Gastrocnemius medialis (tissue), 4 donors: ENCODE measurements at regions of chr1 and their contacts with region 1.

Region 1: DNA sequence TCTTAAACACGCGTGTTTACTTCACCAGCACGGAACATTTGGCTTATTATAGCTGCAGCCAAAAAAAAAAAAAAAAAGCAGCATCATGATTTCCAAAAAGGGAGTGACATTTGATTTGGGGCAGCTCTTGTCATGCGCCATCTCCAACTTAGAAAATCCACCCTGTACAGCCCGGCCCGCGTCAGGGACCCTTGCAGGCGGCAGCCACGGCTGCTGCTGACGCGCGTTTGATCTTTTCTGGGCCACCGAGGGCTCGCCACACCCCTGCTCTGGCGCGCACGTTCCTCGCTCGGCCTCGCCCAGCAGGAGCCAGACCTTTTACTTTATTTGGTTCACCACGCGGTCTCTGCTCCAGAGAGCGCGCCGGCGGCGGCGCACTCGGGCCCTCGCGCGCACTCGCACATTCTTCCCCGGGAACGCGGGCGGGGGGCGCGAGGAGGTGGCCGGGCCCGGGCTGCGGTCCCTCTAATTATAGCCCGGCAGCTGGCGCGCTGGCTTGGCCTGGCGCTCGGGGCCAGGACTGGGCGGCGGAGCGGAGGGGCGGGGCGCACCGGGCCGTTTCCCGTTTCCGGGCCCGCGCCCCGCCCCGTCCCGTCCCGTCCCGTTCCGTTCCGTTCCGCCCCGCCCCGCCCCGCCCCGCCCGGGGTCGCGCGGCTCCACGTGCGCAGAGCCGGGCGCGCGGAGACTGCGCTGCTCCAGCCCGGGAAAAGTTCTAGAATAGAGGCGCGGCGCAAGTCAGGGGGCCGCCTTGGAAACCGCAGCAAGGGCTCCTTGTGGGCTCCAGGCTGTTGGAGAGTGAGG is 10.2 kb downstream of the IRF2BP2 start:
- DNase-seq: peak; percentile 84 to 94
- ATAC-seq: peak; percentile 66 to 69
- H3K4me3 ChIP-seq: peak overlapping the region; percentile 55 to 60 (median 56)
- H3K27ac ChIP-seq: peak overlapping the region; percentile 98
- H3K4me1 ChIP-seq: peaks cover 56 to 57% of the 10 kb centered on the region in 2 donors
- H3K27me3 ChIP-seq: no peaks in the 10 kb centered on the region
- CTCF ChIP-seq: peak in 1 of 5 experiments; percentile 46
- POLR2A ChIP-seq: peak; percentile 76 to 89

Region 2: GRCh38 chr1:234564642-234565037 is 35.2 kb before region 1 on chr1:
- in situ Hi-C with region 1: no loop called
- intact Hi-C with region 1: no loop called
- DNase-seq: peak in 1 of 2 donors; percentile 67
- ATAC-seq: peak; percentile 80 to 94
- H3K4me3 ChIP-seq: no peak overlapping the region
- H3K27ac ChIP-seq: peak overlapping the region; percentile 8 to 74 (median 61)
- H3K4me1 ChIP-seq: peaks cover 29 to 32% of the 10 kb centered on the region in 2 donors
- H3K27me3 ChIP-seq: no peaks in the 10 kb centered on the region
- CTCF ChIP-seq: no peak
- POLR2A ChIP-seq: no peak

Region 3: GRCh38 chr1:235093696-235094592 is 494.1 kb after region 1 on chr1:
- in situ Hi-C with region 1: loop called in 1 of 4 experiments (anchors 10 kb)
- intact Hi-C with region 1: no loop called
- DNase-seq: peak in 1 of 2 donors; percentile 66
- ATAC-seq: peak; percentile 61 to 64
- H3K4me3 ChIP-seq: peak overlapping the region in 2 of 4 donors; percentile 15 to 37
- H3K27ac ChIP-seq: no peak overlapping the region
- H3K4me1 ChIP-seq: peaks cover 5% of the 10 kb centered on the region in 2 donors
- H3K27me3 ChIP-seq: no peaks in the 10 kb centered on the region
- CTCF ChIP-seq: peak; percentile 74 to 95 (median 82)
- POLR2A ChIP-seq: no peak

Region 4: DNA sequence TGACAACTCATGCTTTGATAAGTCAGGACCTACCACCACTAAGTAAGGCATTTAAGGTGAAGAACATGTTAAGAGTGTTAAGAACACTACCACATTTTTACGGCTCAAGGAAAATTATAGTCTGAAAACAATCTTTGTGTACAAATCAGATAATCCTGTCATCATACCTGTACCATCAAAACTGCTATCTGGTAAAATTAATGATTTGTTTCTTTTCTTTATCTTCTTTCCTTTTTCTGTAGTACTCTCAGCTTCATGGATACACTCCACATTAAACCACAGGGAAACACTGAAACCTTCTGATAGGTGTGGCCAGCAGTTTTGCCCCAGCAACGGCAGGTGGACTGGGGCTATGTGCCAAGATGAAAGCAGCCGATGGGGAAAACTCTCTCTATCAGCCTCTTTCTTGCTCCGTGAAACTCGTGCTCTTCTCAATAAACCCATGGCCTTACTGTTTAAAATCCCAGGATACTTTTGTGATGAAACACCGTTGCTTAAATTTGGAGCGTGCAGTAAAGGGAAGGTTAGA is 1191.8 kb after region 1 on chr1:
- in situ Hi-C with region 1: no loop called
- intact Hi-C with region 1: no loop called
- DNase-seq: no peak
- ATAC-seq: no peak
- H3K4me3 ChIP-seq: no peak overlapping the region
- H3K27ac ChIP-seq: no peak overlapping the region
- H3K4me1 ChIP-seq: no peaks in the 10 kb centered on the region
- H3K27me3 ChIP-seq: no peaks in the 10 kb centered on the region
- CTCF ChIP-seq: no peak
- POLR2A ChIP-seq: no peak